Activated CD4-positive, alpha-beta T cell treated with anti-CD3 and anti-CD28 coated beads, Interleukin-2, amount 10 ng/mL, durations not matched to agents 24 days and 14 days (primary cell): ENCODE measurements at regions of chr1 and their contacts with region 1.

Region 1: DNA sequence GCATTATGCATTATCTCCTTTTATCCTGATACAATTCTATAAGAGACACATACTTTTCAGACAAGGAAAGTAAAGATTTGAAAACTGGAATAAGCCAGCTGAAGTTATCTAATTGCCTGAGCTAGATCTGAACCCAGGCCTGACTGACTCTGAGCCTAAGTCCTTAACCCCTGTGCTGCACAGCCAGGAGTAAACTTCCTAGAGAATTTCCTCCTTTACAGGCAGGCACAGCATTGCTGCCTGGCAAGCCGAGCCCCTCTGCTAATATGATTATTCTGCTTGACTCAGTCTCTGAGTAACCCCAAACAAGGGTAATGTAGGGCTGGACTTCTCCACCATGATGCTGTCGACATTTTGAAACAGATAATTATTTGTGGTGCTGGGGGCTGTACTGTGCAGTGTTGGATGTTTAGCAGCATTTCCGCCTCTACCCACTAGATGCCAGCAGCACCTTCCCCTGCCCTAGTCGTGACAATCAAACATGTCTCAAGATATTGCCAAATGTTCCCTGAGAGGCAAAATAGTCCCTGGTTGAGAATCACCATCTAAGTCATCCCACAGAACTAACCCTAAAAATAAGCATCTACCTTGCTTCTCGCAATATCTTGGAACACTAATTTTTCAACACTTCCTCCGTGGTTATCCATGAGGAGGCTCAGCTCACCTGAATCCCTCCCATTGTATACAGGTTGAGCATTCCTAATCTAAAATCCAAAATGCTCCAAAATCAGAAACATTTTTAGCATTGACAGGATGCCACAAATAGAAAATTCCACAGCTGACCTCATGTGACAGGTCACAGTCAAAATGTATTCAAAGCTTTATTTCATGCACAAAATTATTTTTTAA is 18.5 kb downstream of the CAMK1G start:
- DNase-seq: peak; percentile 77
- H3K4me3 Mint-ChIP-seq: no peak overlapping the region
- H3K27ac Mint-ChIP-seq: no peak overlapping the region
- H3K4me1 Mint-ChIP-seq: peaks cover 8% of the 10 kb centered on the region
- H3K27me3 Mint-ChIP-seq: peaks cover 32% of the 10 kb centered on the region

Region 2: DNA sequence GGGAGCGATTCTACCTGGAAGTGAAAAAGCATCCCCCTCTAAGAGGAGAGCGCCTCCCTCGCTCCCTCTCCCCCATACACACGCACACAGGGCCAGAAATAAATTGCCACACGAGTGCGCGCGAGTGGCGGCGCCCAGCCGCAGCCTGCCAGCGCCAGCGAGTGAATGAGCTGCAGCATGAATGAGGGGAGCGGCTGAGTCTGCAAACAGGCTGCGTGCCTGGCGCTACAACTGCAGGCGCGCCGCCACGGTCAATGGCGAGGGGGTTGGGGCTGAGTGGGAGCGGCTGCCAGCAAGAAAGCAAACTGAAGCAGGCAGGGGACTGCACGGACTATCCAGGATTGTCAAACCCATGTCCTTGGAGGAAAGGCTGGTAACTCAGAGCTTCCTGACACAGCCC is 16.4 kb before region 1 on chr1:
- intact Hi-C with region 1: loop called (anchors 2 kb)
- DNase-seq: peak; percentile 71
- H3K4me3 Mint-ChIP-seq: no peak overlapping the region
- H3K27ac Mint-ChIP-seq: no peak overlapping the region
- H3K4me1 Mint-ChIP-seq: peaks cover 1% of the 10 kb centered on the region
- H3K27me3 Mint-ChIP-seq: peaks cover 20% of the 10 kb centered on the region

Region 3: DNA sequence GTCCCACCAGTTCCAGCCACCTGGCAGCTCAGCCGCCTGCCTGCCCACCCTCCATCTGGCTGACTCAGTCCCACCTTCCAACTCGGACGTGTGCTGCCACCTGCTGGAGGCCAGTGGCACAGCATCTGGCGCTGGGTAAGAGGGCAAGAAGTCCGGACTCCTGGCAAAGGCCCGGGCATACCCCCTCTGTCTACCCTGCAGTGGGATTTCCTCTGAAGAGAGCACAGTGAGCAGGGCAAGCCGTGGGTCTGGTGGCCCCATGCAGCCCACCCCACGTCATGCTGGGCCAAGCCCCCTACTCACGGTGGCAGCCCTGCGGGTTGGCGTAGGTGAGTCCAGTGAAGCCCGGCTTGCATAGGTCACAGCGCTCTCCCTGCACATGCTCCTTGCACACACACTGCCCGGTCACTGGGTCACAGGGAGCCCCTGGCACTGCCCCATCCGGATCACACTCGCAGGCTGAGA is 25.7 kb after region 1 on chr1:
- intact Hi-C with region 1: loop called (anchors 1 kb)
- DNase-seq: peak; percentile 94
- H3K4me3 Mint-ChIP-seq: no peak overlapping the region
- H3K27ac Mint-ChIP-seq: peak overlapping the region; percentile 38
- H3K4me1 Mint-ChIP-seq: peaks cover 8% of the 10 kb centered on the region
- H3K27me3 Mint-ChIP-seq: no peaks in the 10 kb centered on the region